ENCODE measurements at regions of chr4 and their contacts with region 1.

Region 1: GRCh38 chr4:78784236-78784865 is 8.2 kb downstream of the BMP2K start:
- DNase-seq: no peak
- ATAC-seq: no peak
- H3K4me3 ChIP-seq: no peak overlapping the region
- H3K27ac ChIP-seq: no peak overlapping the region
- H3K4me1 ChIP-seq: peaks cover 3% of the 10 kb centered on the region; the same call in 1 of the 2 replicates
- H3K27me3 ChIP-seq: no peaks in the 10 kb centered on the region
- CTCF ChIP-seq: no peak
- EP300 ChIP-seq: no peak
- POLR2A ChIP-seq: no peak
- RAD21 ChIP-seq: no peak

Region 2: GRCh38 chr4:78638337-78639172 is 145.8 kb before region 1 on chr4:
- CTCF ChIA-PET with region 1: interaction called, 24 read pairs
- POLR2A ChIA-PET with region 1: no interaction called
- RAD21 ChIA-PET with region 1: interaction called, 6 read pairs
- SMC1A ChIA-PET with region 1: interaction called, 23 read pairs
- in situ Hi-C with region 1: no loop called
- intact Hi-C with region 1: loop called (anchors 5 kb)
- DNase-seq: peak; percentile 86
- ATAC-seq: peak; percentile 78
- H3K4me3 ChIP-seq: no peak overlapping the region; the same call in 1 of the 2 replicates
- H3K27ac ChIP-seq: peak overlapping the region; percentile 62
- H3K4me1 ChIP-seq: peaks cover 57% of the 10 kb centered on the region
- H3K27me3 ChIP-seq: no peaks in the 10 kb centered on the region
- CTCF ChIP-seq: no peak
- EP300 ChIP-seq: peak; percentile 79; a peak in 3 of 4 replicates
- POLR2A ChIP-seq: no peak
- RAD21 ChIP-seq: no peak

Region 3: DNA sequence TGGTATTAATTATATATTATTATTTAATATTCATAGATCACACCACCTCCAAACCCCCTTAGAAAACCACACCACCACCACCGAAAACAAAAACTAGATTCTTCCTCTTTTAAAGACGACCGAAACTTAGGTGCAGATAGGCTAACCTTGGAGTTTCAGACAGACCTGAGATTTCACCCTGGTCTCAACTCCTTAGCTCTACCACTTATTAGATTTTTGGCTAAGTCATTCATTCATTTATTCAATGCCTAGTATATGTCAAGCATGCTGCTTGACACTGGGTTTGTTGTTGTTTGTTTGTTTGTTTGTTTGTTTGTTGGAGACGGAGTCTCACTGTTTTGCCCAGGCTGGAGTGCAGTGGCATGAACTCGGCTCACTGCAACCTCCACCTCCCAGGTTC is 17.7 kb before region 1 on chr4:
- CTCF ChIA-PET with region 1: interaction called, 4 read pairs
- POLR2A ChIA-PET with region 1: interaction called, 5 read pairs
- RAD21 ChIA-PET with region 1: interaction called, 23 read pairs
- SMC1A ChIA-PET with region 1: interaction called, 28 read pairs
- in situ Hi-C with region 1: no loop called
- intact Hi-C with region 1: no loop called
- DNase-seq: no peak
- ATAC-seq: peak; percentile 92
- H3K4me3 ChIP-seq: peak overlapping the region; percentile 14; the same call in 1 of the 2 replicates
- H3K27ac ChIP-seq: no peak overlapping the region
- H3K4me1 ChIP-seq: peaks cover 27% of the 10 kb centered on the region
- H3K27me3 ChIP-seq: no peaks in the 10 kb centered on the region
- CTCF ChIP-seq: no peak
- EP300 ChIP-seq: no peak
- POLR2A ChIP-seq: no peak
- RAD21 ChIP-seq: no peak

Region 4: DNA sequence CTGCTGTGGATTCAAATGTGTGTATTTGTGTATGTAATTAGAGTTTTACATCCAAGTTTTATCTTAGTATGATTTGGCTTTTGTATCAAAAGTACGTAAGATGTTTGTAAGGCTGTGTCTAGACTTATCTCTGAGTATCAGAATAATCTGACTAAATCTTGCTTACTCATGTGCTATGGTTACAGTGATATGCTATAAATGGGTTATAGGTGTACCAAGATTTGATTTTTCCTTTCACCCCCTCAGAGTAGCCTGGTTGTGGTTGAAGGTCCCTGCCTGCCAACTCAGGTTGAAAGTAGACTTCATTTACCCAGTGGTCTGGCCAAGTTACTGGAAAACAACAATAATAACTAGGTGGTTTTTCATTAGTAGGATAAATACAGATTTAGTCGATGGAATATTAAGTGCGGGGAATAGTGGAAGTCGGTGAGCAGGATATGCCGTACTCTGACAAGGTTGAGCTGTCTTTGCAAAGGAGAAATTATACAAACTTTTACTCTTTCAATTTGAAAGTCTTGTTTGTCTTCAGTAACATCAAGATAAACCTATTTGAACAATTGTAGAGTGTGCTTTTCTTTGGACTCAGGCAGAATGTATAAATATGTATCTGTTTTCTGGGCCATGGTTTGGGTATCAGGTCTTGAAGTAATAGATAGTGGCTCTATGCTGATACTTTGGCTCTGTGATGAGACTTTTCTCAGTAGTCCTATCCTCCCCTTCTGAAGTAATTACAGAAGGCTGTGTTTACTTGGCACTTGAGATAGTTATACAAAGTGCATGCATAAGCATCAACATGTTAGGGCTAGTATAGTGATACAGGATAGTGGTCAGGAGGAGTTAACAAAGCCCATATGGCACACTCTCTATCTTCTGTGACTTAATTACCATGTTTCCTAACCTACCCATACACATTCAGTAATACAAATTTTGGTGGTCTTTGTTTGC is 15.5 kb after region 1 on chr4:
- CTCF ChIA-PET with region 1: interaction called, 10 read pairs
- POLR2A ChIA-PET with region 1: interaction called, 4 read pairs
- RAD21 ChIA-PET with region 1: interaction called, 12 read pairs
- SMC1A ChIA-PET with region 1: interaction called, 25 read pairs
- in situ Hi-C with region 1: no loop called
- intact Hi-C with region 1: no loop called
- DNase-seq: no peak
- ATAC-seq: peak; percentile 73
- H3K4me3 ChIP-seq: no peak overlapping the region
- H3K27ac ChIP-seq: no peak overlapping the region
- H3K4me1 ChIP-seq: peaks cover 6% of the 10 kb centered on the region; the same call in 1 of the 2 replicates
- H3K27me3 ChIP-seq: no peaks in the 10 kb centered on the region
- CTCF ChIP-seq: no peak
- EP300 ChIP-seq: no peak
- POLR2A ChIP-seq: no peak
- RAD21 ChIP-seq: no peak

Region 5: DNA sequence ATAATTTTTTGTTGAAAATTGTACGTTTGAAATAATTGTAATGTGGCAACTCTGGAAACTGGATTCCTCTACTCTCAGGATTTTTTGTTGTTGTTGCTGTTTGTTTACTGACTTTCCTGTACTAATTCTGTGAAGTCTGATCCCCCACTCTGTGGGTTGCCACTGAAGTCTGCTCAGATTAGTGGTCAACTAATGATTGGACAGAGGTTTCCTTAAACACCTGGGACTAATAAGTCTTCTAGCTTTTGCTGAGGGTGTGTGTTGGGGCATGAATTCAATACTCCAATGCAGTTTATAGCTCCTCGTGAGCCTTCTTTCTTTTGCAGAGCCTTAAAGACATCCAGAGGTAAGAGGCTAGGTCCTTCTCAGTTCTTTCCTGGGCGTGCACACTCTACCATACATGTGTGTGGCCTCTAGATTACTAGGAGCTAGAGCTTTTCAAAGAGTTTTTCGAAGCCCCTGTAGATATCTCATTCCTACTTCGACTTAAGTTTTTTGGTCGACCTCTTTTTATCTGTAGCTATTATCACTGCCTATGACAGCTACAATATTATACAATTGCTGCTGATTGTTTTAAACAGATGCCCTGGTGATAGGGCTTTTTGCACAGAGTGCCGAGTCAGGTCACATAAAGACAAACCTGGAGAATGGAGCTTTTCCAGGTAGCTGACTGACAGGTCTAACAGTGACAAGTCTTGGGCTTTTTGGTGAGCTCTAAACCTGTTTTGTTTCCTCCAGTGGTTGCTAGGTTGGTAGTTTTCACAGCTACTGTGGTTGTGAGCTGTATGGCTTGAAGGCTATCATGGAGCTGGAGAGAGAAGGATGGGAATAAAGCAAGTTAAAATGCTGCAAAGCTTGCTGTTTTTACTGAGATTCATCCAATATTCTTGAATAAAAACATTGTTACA is 25.8 kb after region 1 on chr4:
- CTCF ChIA-PET with region 1: interaction called, 5 read pairs
- POLR2A ChIA-PET with region 1: interaction called, 4 read pairs
- RAD21 ChIA-PET with region 1: interaction called, 4 read pairs
- SMC1A ChIA-PET with region 1: interaction called, 15 read pairs
- in situ Hi-C with region 1: no loop called
- intact Hi-C with region 1: no loop called
- DNase-seq: no peak
- ATAC-seq: peak; percentile 71
- H3K4me3 ChIP-seq: no peak overlapping the region
- H3K27ac ChIP-seq: no peak overlapping the region
- H3K4me1 ChIP-seq: no peaks in the 10 kb centered on the region
- H3K27me3 ChIP-seq: no peaks in the 10 kb centered on the region
- CTCF ChIP-seq: no peak
- EP300 ChIP-seq: no peak
- POLR2A ChIP-seq: no peak
- RAD21 ChIP-seq: no peak

Measured in GM12878 (cell line).